Activated T-helper 1 cell treated with anti-CD3 and anti-CD28 coated beads, Interleukin-12 subunit alpha, Interleukin-12 subunit beta, Interleukin-2, Interleukin-4 antibody, amounts not matched to agents 30 ng/mL and 10 ng/mL and 1 ng/mL, durations not matched to agents 14 hours and 24 hours and 36 hours (primary cell): ENCODE measurements at regions of chr10 and their contacts with region 1.

Region 1: DNA sequence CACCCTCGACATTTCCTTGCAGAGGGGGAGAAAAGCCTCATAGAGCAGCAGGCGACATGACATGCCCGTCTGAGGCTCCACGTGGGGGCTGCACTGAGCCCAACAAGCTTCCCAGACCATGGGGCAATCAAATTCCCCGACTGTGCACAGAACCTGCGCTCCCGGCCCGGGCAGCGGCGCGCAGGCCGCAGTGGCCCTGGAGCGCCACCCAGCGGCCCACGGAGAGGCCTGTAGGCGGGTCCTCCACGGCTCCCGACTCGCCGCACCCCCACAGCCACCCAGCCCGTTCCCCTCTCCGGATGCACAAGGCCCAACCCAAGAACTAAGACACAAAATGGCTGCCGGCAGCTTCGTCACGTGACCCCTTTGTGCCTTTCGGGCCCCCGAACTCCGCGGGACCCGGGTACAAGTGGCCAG is 816 bp downstream of the EPC1 start:
- DNase-seq: peak; percentile 93
- H3K4me3 Mint-ChIP-seq: peak overlapping the region; percentile 94
- H3K27ac Mint-ChIP-seq: peak overlapping the region; percentile 98
- H3K4me1 Mint-ChIP-seq: peaks cover 70% of the 10 kb centered on the region
- H3K27me3 Mint-ChIP-seq: no peaks in the 10 kb centered on the region

Region 2: GRCh38 chr10:31928549-31929260 is 417.4 kb before region 1 on chr10 and contains the start of gene ARHGAP12:
- intact Hi-C with region 1: loop called (anchors 10 kb)
- DNase-seq: peak; percentile 68
- H3K4me3 Mint-ChIP-seq: peak within 1 kb of the TSS; percentile 88
- H3K27ac Mint-ChIP-seq: peak within 1 kb of the TSS; percentile 73
- H3K4me1 Mint-ChIP-seq: peaks cover 56% of the 10 kb centered on the region
- H3K27me3 Mint-ChIP-seq: peaks cover 13% of the 10 kb centered on the region
- total RNA-seq, gene ARHGAP12: 2.4 and 3.5 TPM in 2 replicates

Region 3: GRCh38 chr10:32190890-32191491 is 155.2 kb before region 1 on chr10:
- intact Hi-C with region 1: loop called (anchors 1 kb)
- DNase-seq: no peak
- H3K4me3 Mint-ChIP-seq: no peak overlapping the region
- H3K27ac Mint-ChIP-seq: no peak overlapping the region
- H3K4me1 Mint-ChIP-seq: peaks cover 7% of the 10 kb centered on the region
- H3K27me3 Mint-ChIP-seq: no peaks in the 10 kb centered on the region

Region 4: GRCh38 chr10:32318476-32318896 is 27.7 kb before region 1 on chr10:
- intact Hi-C with region 1: loop called (anchors 1 kb)
- DNase-seq: no peak
- H3K4me3 Mint-ChIP-seq: peak overlapping the region; percentile 5
- H3K27ac Mint-ChIP-seq: peak overlapping the region; percentile 69
- H3K4me1 Mint-ChIP-seq: peaks cover 57% of the 10 kb centered on the region
- H3K27me3 Mint-ChIP-seq: no peaks in the 10 kb centered on the region

Region 5: GRCh38 chr10:32367793-32368453 is 21.8 kb after region 1 on chr10:
- intact Hi-C with region 1: loop called (anchors 1 kb)
- DNase-seq: peak; percentile 49
- H3K4me3 Mint-ChIP-seq: no peak overlapping the region
- H3K27ac Mint-ChIP-seq: peak overlapping the region; percentile 8
- H3K4me1 Mint-ChIP-seq: peaks cover 45% of the 10 kb centered on the region
- H3K27me3 Mint-ChIP-seq: no peaks in the 10 kb centered on the region